ENCODE measurements at regions of chr1 and their contacts with region 1.

Region 1: DNA sequence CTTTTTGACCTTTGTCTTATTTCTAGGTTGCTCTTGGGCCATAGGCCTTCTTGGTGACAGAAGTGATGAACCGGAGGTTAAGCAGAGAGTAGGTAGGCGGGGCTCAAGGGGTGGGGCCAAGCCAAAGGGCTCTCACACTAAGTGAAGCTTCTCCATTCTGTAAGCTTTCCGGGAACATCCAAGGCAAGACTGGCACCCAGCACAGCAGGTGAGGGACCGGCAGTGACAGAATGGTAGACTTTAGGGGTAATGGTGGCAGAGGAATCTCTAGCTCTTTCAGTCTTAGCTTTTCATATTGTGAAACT is at the start of gene TNFAIP8L2:
- DNase-seq: peak; percentile 58 to 80
- ATAC-seq: peak; percentile 83 to 91 (median 89)
- H3K4me3 ChIP-seq: peak within 1 kb of the TSS; percentile 76
- H3K4me3 Mint-ChIP-seq: peak within 1 kb of the TSS; percentile 96
- H3K27ac ChIP-seq: peak within 1 kb of the TSS; percentile 68
- H3K27ac Mint-ChIP-seq: peak within 1 kb of the TSS; percentile 89 to 96
- H3K4me1 ChIP-seq: peaks cover 46% of the 10 kb centered on the region
- H3K4me1 Mint-ChIP-seq: peaks cover 39 to 47% of the 10 kb centered on the region in 2 donors
- H3K27me3 ChIP-seq: no peaks in the 10 kb centered on the region
- H3K27me3 Mint-ChIP-seq: no peaks in the 10 kb centered on the region
- CTCF ChIP-seq: no peak
- total RNA-seq, gene TNFAIP8L2: 4.8 to 14.5 (median 5.7) TPM

Region 2: GRCh38 chr1:150979092-150980056 is 177.1 kb before region 1 on chr1:
- intact Hi-C with region 1: loop called (anchors 5 kb)
- DNase-seq: peak; percentile 80 to 93
- ATAC-seq: peak; percentile 64 to 84 (median 67)
- H3K4me3 ChIP-seq: peak overlapping the region; percentile 6
- H3K4me3 Mint-ChIP-seq: peak overlapping the region; percentile 59
- H3K27ac ChIP-seq: no peak overlapping the region
- H3K27ac Mint-ChIP-seq: peak overlapping the region in 1 of 2 donors; percentile 52
- H3K4me1 ChIP-seq: peaks cover 41% of the 10 kb centered on the region
- H3K4me1 Mint-ChIP-seq: peaks cover 18% of the 10 kb centered on the region in 2 donors
- H3K27me3 ChIP-seq: no peaks in the 10 kb centered on the region
- H3K27me3 Mint-ChIP-seq: no peaks in the 10 kb centered on the region
- CTCF ChIP-seq: peak; percentile 100

Region 3: GRCh38 chr1:151098126-151098525 is 58.3 kb before region 1 on chr1:
- intact Hi-C with region 1: loop called (anchors 1 kb)
- DNase-seq: no peak
- ATAC-seq: no peak
- H3K4me3 ChIP-seq: no peak overlapping the region
- H3K4me3 Mint-ChIP-seq: no peak overlapping the region
- H3K27ac ChIP-seq: no peak overlapping the region
- H3K27ac Mint-ChIP-seq: no peak overlapping the region
- H3K4me1 ChIP-seq: no peaks in the 10 kb centered on the region
- H3K4me1 Mint-ChIP-seq: no peaks in the 10 kb centered on the region
- H3K27me3 ChIP-seq: no peaks in the 10 kb centered on the region
- H3K27me3 Mint-ChIP-seq: no peaks in the 10 kb centered on the region
- CTCF ChIP-seq: no peak

Region 4: DNA sequence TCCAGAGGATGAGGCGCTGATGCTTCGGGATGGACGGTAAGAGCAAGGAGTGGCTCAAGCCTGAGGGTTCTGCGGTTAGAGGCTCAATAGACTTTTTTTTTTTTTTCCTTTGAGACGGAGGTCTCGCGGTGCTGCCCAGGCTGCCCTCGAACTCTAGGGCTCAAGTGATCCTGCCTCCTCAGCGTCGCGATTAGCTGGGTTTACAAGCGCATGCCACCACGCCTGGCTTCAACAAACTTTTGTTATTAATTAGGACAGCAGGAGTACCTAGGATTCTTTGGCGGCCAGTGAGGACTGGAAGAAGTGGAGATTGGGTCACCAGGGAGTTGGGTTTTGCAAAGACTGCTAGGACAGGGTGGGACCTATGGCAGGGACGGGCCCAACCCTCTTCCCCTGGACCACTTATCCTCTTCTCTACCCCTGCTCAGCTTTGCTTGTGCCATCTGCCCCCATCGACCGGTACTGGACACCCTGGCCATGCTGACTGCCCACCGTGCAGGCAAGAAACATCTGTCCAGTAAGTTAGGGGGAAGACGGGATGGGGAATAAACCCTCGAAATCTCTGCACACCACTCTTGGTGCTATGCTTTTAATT is 10.1 kb after region 1 on chr1:
- intact Hi-C with region 1: no loop called
- DNase-seq: no peak
- ATAC-seq: no peak
- H3K4me3 ChIP-seq: peak overlapping the region; percentile 90
- H3K4me3 Mint-ChIP-seq: peak overlapping the region; percentile 99
- H3K27ac ChIP-seq: peak overlapping the region; percentile 68
- H3K27ac Mint-ChIP-seq: peak overlapping the region; percentile 94
- H3K4me1 ChIP-seq: peaks cover 24% of the 10 kb centered on the region
- H3K4me1 Mint-ChIP-seq: peaks cover 30 to 38% of the 10 kb centered on the region in 2 donors
- H3K27me3 ChIP-seq: no peaks in the 10 kb centered on the region
- H3K27me3 Mint-ChIP-seq: no peaks in the 10 kb centered on the region
- CTCF ChIP-seq: no peak

Region 5: GRCh38 chr1:151222130-151222529 is 65.7 kb after region 1 on chr1:
- intact Hi-C with region 1: no loop called
- DNase-seq: no peak
- ATAC-seq: no peak
- H3K4me3 ChIP-seq: no peak overlapping the region
- H3K4me3 Mint-ChIP-seq: no peak overlapping the region
- H3K27ac ChIP-seq: no peak overlapping the region
- H3K27ac Mint-ChIP-seq: no peak overlapping the region
- H3K4me1 ChIP-seq: no peaks in the 10 kb centered on the region
- H3K4me1 Mint-ChIP-seq: no peaks in the 10 kb centered on the region
- H3K27me3 ChIP-seq: no peaks in the 10 kb centered on the region
- H3K27me3 Mint-ChIP-seq: no peaks in the 10 kb centered on the region
- CTCF ChIP-seq: no peak

Measured in natural killer cell (primary cell).